Natural killer cell (primary cell): ENCODE measurements at regions of chr5 and their contacts with region 1.

Region 1: GRCh38 chr5:68379275-68380036 is 163.9 kb downstream of the PIK3R1 start:
- DNase-seq: no peak
- ATAC-seq: no peak
- H3K4me3 ChIP-seq: no peak overlapping the region
- H3K4me3 Mint-ChIP-seq: peak overlapping the region; percentile 42
- H3K27ac ChIP-seq: no peak overlapping the region
- H3K27ac Mint-ChIP-seq: peak overlapping the region; percentile 91 to 93
- H3K4me1 ChIP-seq: peaks cover 38% of the 10 kb centered on the region
- H3K4me1 Mint-ChIP-seq: peaks cover 85 to 89% of the 10 kb centered on the region in 2 donors
- H3K27me3 ChIP-seq: no peaks in the 10 kb centered on the region
- H3K27me3 Mint-ChIP-seq: no peaks in the 10 kb centered on the region
- CTCF ChIP-seq: no peak

Region 2: DNA sequence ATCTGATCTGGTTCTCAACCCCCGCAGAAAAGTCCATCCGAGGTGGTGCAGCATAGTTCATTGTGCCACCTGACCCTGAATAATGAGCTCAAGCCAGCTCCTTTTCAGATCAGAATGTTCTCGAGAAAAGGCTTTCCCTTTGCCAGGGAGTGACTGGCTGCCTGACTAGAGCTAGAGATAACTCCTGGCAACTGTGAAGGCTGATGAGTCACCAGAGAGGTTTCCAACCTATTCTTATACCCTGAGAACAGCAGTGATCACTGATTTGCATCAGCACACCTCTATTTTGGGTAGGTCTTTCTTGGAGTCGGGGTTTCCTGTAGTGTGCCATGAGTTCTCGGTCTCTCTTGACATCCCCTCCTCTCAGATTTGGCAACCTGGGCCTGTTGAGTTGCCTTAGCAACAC is 36.0 kb before region 1 on chr5:
- intact Hi-C with region 1: loop called (anchors 5 kb)
- DNase-seq: peak in 1 of 2 donors; percentile 14
- ATAC-seq: peak in 2 of 3 donors; percentile 24 to 28
- H3K4me3 ChIP-seq: no peak overlapping the region
- H3K4me3 Mint-ChIP-seq: no peak overlapping the region
- H3K27ac ChIP-seq: no peak overlapping the region
- H3K27ac Mint-ChIP-seq: peak overlapping the region in 1 of 2 donors; percentile 79
- H3K4me1 ChIP-seq: peaks cover 24% of the 10 kb centered on the region
- H3K4me1 Mint-ChIP-seq: peaks cover 31 to 36% of the 10 kb centered on the region in 2 donors
- H3K27me3 ChIP-seq: no peaks in the 10 kb centered on the region
- H3K27me3 Mint-ChIP-seq: no peaks in the 10 kb centered on the region
- CTCF ChIP-seq: no peak